ENCODE measurements at regions of chr16 and their contacts with region 1.

Region 1: DNA sequence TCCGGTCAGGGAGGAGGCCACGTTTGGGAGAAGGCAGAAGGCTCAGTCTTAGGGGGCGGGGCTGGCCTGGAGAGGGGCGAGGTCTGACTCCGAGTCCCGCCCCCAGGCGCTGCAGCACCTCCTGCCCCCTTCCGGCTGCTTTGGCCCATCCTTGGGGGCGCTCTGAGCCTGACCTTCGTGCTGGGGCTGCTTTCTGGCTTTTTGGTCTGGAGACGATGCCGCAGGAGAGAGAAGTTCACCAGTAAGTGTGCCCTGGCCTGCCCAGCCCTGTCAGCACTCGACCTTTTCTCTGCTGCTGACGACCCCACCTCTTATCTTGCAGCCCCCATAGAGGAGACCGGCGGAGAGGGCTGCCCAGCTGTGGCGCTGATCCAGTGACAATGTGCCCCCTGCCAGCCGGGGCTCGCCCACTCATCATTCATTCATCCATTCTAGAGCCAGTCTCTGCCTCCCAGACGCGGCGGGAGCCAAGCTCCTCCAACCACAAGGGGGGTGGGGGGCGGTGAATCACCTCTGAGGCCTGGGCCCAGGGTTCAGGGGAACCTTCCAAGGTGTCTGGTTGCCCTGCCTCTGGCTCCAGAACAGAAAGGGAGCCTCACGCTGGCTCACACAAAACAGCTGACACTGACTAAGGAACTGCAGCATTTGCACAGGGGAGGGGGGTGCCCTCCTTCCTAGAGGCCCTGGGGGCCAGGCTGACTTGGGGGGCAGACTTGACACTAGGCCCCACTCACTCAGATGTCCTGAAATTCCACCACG is 1.5 kb downstream of the TNFRSF12A start:
- DNase-seq: peak; percentile 85
- ATAC-seq: peak; percentile 15
- H3K4me3 Mint-ChIP-seq: peak overlapping the region; percentile 90
- H3K27ac Mint-ChIP-seq: peak overlapping the region; percentile 87
- H3K4me1 Mint-ChIP-seq: peaks cover 36% of the 10 kb centered on the region
- H3K27me3 Mint-ChIP-seq: peaks cover 21% of the 10 kb centered on the region

Region 2: DNA sequence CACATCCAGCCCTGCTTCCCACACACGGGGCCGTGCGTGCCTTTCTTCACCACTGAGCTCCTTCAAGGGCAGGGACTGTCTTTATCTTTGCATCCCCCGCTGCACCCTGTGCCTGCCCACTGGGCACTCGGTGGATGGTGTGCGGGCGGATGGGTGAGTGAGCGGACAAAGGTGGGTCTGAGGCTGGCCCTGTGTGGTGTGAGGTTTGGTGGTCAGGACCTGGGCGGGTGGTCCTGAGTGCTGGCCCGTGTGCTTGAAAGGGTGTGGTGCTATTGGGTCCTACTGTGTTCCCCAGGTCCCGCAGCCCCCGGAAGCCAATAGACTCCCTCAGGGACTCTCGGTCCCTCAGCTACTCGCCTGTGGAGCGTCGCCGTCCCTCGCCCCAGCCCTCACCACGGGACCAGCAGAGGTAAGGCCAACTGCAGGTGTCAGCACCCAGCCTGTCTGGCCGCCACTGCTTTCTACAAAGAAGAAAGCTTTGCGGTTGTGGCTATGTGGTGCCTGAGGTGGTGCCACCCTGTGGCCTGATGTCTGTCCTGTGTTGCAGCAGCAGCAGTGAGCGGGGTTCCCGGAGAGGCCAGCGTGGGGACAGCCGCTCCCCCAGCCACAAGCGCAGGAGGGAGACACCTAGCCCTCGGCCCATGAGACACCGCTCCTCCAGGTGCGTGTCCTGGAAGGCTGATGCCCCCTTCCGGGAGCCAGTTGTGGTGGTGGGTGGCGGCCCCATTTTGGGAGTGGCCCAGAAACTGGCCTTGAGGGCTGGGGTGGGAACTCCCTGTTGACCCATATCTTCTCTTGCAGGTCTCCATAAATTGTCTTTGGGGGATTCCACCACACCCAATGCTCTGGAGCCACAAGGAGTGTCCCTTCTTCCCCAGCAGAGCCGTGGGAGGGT is 251.3 kb before region 1 on chr16:
- POLR2A ChIA-PET with region 1: no interaction called
- DNase-seq: no peak
- ATAC-seq: no peak
- H3K4me3 Mint-ChIP-seq: no peak overlapping the region
- H3K27ac Mint-ChIP-seq: no peak overlapping the region
- H3K4me1 Mint-ChIP-seq: no peaks in the 10 kb centered on the region
- H3K27me3 Mint-ChIP-seq: no peaks in the 10 kb centered on the region

Region 3: GRCh38 chr16:3045357-3045728 is 23.7 kb after region 1 on chr16:
- POLR2A ChIA-PET with region 1: interaction called, 19 read pairs
- DNase-seq: no peak
- ATAC-seq: peak; percentile 45
- H3K4me3 Mint-ChIP-seq: peak overlapping the region; percentile 77
- H3K27ac Mint-ChIP-seq: peak overlapping the region; percentile 83
- H3K4me1 Mint-ChIP-seq: peaks cover 23% of the 10 kb centered on the region
- H3K27me3 Mint-ChIP-seq: peaks cover 35% of the 10 kb centered on the region

Measured in activated naive CD8-positive, alpha-beta T cell treated with anti-CD3 and anti-CD28 coated beads, Interleukin-2, amount 10 ng/mL, durations not matched to agents 7 days and 5 days (primary cell).